ENCODE measurements at regions of chr22 and their contacts with region 1.

Region 1: DNA sequence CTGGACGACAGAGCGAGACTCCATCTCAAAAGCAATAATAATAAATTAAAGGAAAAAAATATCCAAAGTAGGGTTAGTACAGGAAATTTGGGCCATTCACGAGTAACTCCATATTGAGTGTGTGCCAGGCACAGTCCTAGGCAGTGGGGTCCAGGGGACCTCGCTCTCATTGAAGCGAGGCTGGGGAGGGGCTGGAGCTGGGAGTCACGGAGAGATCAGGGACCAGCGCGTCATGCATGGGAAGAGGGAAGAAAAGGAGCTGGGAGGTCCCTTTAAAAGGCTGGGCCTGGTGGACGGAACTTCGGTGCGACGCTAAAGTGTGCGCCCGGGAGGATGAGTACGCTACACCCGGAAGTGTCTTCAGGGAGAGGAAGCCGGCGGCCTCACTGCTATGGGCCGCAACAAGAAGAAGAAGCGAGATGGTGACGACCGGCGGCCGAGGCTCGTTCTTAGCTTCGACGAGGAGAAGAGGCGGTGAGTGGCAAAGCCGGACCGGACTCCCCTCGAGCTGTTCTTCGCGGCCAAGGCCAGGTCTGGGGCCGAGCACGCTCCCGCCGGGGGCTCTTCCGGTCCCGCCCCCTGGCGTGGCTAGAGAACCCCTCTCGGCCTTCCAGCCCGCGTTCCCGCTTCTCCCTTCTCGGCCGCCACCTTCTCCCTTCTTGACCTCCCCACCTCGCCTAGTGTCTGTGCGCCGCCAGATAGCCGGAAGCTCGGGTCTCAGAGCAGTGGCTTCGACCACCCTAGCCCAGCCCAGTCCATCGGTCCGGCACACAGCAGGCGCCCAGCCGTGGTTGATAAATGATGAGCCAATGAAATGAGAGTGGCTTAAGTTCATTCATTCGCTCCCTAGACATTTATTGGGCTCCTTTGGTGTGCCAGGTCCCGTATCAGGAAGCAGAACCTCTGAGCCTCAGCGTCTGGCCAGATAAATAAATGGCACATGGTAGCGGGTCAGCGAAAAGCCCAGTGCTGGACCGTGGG is at the start of gene NOL12:
- DNase-seq: peak; percentile 92
- H3K4me3 ChIP-seq: peak within 1 kb of the TSS; percentile 59 to 86 (median 64)
- H3K27ac ChIP-seq: peak within 1 kb of the TSS; percentile 81 to 96 (median 88)
- H3K4me1 ChIP-seq: peaks cover 0 to 32% (median 23%) of the 10 kb centered on the region in 4 donors
- H3K27me3 ChIP-seq: no peaks in the 10 kb centered on the region
- CTCF ChIP-seq: no peak
- EP300 ChIP-seq: no peak
- POLR2A ChIP-seq: peak; percentile 25 to 27
- total RNA-seq, gene NOL12: 10.7 to 28.2 (median 12.5) TPM

Region 2: GRCh38 chr22:37674951-37675929 is 11.1 kb before region 1 on chr22 and contains the start of gene LGALS1:
- intact Hi-C with region 1: no loop called
- DNase-seq: peak; percentile 99
- H3K4me3 ChIP-seq: peak within 1 kb of the TSS; percentile 48 to 67 (median 59)
- H3K27ac ChIP-seq: peak within 1 kb of the TSS; percentile 92 to 99 (median 95)
- H3K4me1 ChIP-seq: peaks cover 0 to 62% (median 52%) of the 10 kb centered on the region in 4 donors
- H3K27me3 ChIP-seq: no peaks in the 10 kb centered on the region
- CTCF ChIP-seq: no peak
- EP300 ChIP-seq: peak in 2 of 4 donors; percentile 49 to 50
- POLR2A ChIP-seq: peak; percentile 79 to 89
- total RNA-seq, gene LGALS1: 911 to 2,925 (median 2,030) TPM

Region 3: DNA sequence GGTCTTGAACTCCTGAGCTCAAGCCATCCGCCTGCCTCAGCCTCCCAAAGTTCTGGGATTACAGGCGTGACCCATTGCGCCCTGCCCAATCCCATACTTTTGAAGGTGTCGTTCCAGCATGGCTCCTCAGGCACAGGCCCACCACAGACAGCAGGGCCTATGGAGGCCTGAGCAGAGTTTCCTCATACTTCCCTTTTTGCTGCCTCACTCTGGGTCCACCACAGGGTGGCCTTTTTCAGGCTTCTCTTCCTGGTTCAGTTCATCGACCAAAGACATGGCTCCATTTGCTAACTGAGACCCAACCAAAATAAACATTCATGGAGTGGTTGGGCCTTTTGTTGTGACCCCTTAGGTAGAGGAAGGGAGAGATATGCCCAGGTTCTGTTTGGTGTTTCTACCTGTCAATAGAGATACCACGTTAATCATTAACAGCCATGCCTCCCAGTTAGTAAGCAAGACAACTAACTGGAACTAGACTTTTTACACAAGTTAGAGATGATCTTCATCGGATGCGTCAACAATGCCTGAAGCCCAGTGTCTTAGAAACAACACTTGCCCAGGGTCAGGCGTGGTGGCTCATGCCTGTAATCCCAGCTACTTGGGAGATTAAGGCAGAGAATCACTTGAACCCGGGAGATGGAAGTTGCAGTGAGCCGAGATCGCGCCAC is 45.6 kb after region 1 on chr22:
- intact Hi-C with region 1: loop called (anchors 2 kb)
- DNase-seq: no peak
- H3K4me3 ChIP-seq: no peak overlapping the region
- H3K27ac ChIP-seq: peak overlapping the region in 1 of 4 donors; percentile 3
- H3K4me1 ChIP-seq: peaks cover 0 to 10% (median 2%) of the 10 kb centered on the region in 4 donors
- H3K27me3 ChIP-seq: no peaks in the 10 kb centered on the region
- CTCF ChIP-seq: peak in 1 of 4 experiments; percentile 18
- EP300 ChIP-seq: no peak
- POLR2A ChIP-seq: no peak

Region 4: GRCh38 chr22:37745548-37746365 is 59.5 kb after region 1 on chr22:
- intact Hi-C with region 1: loop called (anchors 2 kb)
- DNase-seq: peak; percentile 96
- H3K4me3 ChIP-seq: peak overlapping the region; percentile 72 to 99 (median 76)
- H3K27ac ChIP-seq: peak overlapping the region; percentile 91 to 98 (median 98)
- H3K4me1 ChIP-seq: peaks cover 0 to 89% (median 84%) of the 10 kb centered on the region in 4 donors
- H3K27me3 ChIP-seq: no peaks in the 10 kb centered on the region
- CTCF ChIP-seq: no peak
- EP300 ChIP-seq: no peak
- POLR2A ChIP-seq: no peak

Region 5: GRCh38 chr22:37807410-37808293 is 121.4 kb after region 1 on chr22 and contains the start of gene GCAT:
- intact Hi-C with region 1: loop called (anchors 5 kb)
- DNase-seq: peak; percentile 98
- H3K4me3 ChIP-seq: peak within 1 kb of the TSS; percentile 57 to 68 (median 64)
- H3K27ac ChIP-seq: peak within 1 kb of the TSS; percentile 87 to 96 (median 91)
- H3K4me1 ChIP-seq: peaks cover 0 to 55% (median 36%) of the 10 kb centered on the region in 4 donors
- H3K27me3 ChIP-seq: no peaks in the 10 kb centered on the region
- CTCF ChIP-seq: no peak
- EP300 ChIP-seq: no peak
- POLR2A ChIP-seq: peak; percentile 58 to 65
- total RNA-seq, gene GCAT: 5.1 to 14.1 (median 7.7) TPM

Measured in sigmoid colon (tissue), 7 donors.